ENCODE measurements at regions of chr10 and their contacts with region 1.

Region 1: GRCh38 chr10:93080350-93081046 is 6.8 kb downstream of the CYP26A1 start:
- DNase-seq: peak; percentile 64

Region 2: GRCh38 chr10:93015722-93016121 is 64.8 kb before region 1 on chr10:
- in situ Hi-C with region 1: no loop called
- DNase-seq: no peak

Region 3: DNA sequence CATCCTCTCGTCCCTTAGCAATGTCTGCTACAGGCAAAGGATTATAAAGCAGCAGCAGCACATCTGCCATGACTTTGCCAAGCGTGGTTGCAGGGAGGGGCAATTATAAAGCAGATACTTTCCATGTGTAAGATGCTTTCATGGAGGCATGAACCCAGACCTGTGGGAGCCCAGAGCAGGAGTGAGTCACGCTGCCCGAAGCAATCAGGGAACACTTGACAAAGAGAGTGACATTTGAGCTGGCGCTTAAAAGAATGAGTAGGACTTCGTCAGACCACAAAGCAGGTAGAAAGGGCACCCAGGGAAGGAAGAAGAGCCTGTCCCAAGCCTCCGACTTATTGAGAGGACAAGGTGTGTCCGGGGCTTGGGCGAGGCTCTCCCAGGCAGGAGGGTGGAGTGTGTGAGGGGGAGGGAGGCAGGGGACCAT is 254.4 kb after region 1 on chr10:
- in situ Hi-C with region 1: loop called (anchors 25 kb)
- DNase-seq: no peak

Measured in KBM-7 (cell line).